ENCODE measurements at regions of chr2 and their contacts with region 1.

Region 1: DNA sequence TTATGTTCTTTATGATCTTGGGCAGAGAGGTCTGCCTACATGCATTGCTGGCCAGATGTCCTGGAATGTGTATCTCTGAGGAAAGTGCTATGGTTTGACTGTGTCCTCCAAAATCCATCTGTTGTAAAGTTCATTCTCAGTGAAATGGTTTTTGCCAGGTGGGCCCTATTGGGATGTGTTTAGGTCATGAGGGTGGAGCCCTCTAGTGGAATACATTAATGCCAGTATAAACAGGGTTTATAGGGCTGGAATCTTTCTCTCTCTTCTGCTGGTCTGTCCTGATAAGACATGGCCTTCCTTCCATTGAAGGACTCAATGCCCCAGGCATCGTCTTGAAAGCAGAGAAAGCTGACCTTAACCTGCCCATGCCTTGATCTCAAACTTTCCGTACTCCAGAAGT is 258.5 kb downstream of the RPIA start:
- DNase-seq: peak; percentile 16
- H3K4me3 ChIP-seq: no peak overlapping the region
- H3K27ac ChIP-seq: no peak overlapping the region
- H3K4me1 ChIP-seq: no peaks in the 10 kb centered on the region
- H3K27me3 ChIP-seq: peaks cover 19% of the 10 kb centered on the region
- CTCF ChIP-seq: peak; percentile 48

Region 2: GRCh38 chr2:88739985-88740600 is 209.9 kb before region 1 on chr2:
- CTCF ChIA-PET with region 1: no interaction called
- POLR2A ChIA-PET with region 1: no interaction called
- intact Hi-C with region 1: loop called (anchors 10 kb)
- DNase-seq: peak; percentile 74
- H3K4me3 ChIP-seq: no peak overlapping the region
- H3K27ac ChIP-seq: no peak overlapping the region
- H3K4me1 ChIP-seq: peaks cover 6% of the 10 kb centered on the region
- H3K27me3 ChIP-seq: no peaks in the 10 kb centered on the region
- CTCF ChIP-seq: peak; percentile 92

Region 3: GRCh38 chr2:89000235-89000634 is 50.2 kb after region 1 on chr2:
- CTCF ChIA-PET with region 1: no interaction called
- POLR2A ChIA-PET with region 1: no interaction called
- intact Hi-C with region 1: loop called (anchors 10 kb)
- DNase-seq: no peak
- H3K4me3 ChIP-seq: no peak overlapping the region
- H3K27ac ChIP-seq: no peak overlapping the region
- H3K4me1 ChIP-seq: no peaks in the 10 kb centered on the region
- H3K27me3 ChIP-seq: no peaks in the 10 kb centered on the region
- CTCF ChIP-seq: no peak

Measured in A673 (cell line).